ENCODE measurements at regions of chr3 and their contacts with region 1.

Region 1: GRCh38 chr3:47443611-47443995 is 32.1 kb downstream of the SCAP start:
- DNase-seq: peak; percentile 72 to 79
- H3K4me3 ChIP-seq: 0 out of 2 replicates have a peak overlapping the region, but pooled peaks have one; percentile 5
- H3K4me3 Mint-ChIP-seq: peak overlapping the region; percentile 55
- H3K27ac Mint-ChIP-seq: peak overlapping the region; percentile 70
- H3K4me1 ChIP-seq: peaks cover 37% of the 10 kb centered on the region
- H3K4me1 Mint-ChIP-seq: peaks cover 32% of the 10 kb centered on the region
- H3K27me3 ChIP-seq: no peaks in the 10 kb centered on the region; the same call in 1 of the 2 replicates
- H3K27me3 Mint-ChIP-seq: no peaks in the 10 kb centered on the region
- CTCF ChIP-seq: no peak

Region 2: GRCh38 chr3:47394140-47394870 is 49.3 kb before region 1 on chr3:
- CTCF ChIA-PET with region 1: no interaction called
- POLR2A ChIA-PET with region 1: interaction called, 13 read pairs
- intact Hi-C with region 1: no loop called
- DNase-seq: peak; percentile 82 to 87
- H3K4me3 ChIP-seq: peak overlapping the region; percentile 5; the same call in 1 of the 2 replicates
- H3K4me3 Mint-ChIP-seq: peak overlapping the region; percentile 69
- H3K27ac Mint-ChIP-seq: peak overlapping the region; percentile 90
- H3K4me1 ChIP-seq: peaks cover 33% of the 10 kb centered on the region
- H3K4me1 Mint-ChIP-seq: peaks cover 17% of the 10 kb centered on the region
- H3K27me3 ChIP-seq: no peaks in the 10 kb centered on the region
- H3K27me3 Mint-ChIP-seq: no peaks in the 10 kb centered on the region
- CTCF ChIP-seq: peak in 1 of 2 experiments; percentile 42

Region 3: GRCh38 chr3:47455806-47456452 is 12.3 kb after region 1 on chr3:
- CTCF ChIA-PET with region 1: no interaction called
- POLR2A ChIA-PET with region 1: no interaction called
- intact Hi-C with region 1: no loop called
- DNase-seq: no peak
- H3K4me3 ChIP-seq: no peak overlapping the region
- H3K4me3 Mint-ChIP-seq: no peak overlapping the region
- H3K27ac Mint-ChIP-seq: no peak overlapping the region
- H3K4me1 ChIP-seq: peaks cover 5% of the 10 kb centered on the region; the same call in 1 of the 2 replicates
- H3K4me1 Mint-ChIP-seq: no peaks in the 10 kb centered on the region
- H3K27me3 ChIP-seq: no peaks in the 10 kb centered on the region
- H3K27me3 Mint-ChIP-seq: no peaks in the 10 kb centered on the region
- CTCF ChIP-seq: no peak

Region 4: DNA sequence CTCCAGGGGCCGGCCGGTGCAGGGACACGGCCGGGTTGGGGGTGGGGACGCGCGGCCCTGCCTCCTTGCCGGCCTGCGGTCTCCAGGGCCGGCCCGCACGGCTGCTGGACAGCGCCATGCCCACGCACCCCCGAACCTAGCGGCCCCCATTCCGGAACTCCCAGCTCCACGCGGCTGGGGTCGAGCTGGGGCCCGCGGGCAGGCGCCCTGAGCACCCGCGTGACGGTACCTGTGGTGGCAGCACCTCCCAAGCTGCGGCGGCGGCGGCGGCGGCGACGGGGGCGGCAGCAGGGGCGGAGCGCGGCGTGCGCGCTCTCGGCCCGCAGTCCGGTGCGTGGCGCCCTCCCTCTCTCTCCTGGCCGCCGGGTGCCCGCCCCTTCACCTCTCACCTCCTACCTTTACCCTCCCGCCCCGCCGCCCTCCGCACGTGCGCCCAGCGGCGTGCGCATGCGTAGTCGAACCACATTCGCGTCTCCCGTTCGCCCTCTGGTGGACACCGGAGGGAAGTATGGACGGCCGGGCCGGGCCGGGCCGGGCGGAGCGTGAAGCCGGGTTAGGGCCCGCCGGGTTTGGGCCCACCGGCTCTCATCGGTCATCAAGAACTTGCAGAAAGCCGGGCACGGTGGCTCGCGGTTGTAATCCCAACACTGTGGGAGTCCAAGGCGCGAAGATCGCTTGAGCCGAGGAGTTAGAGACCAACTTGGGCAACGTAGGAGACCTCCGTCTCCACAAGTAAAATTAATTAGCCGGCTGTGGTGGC is 32.1 kb after region 1 on chr3 and contains the start of gene SCAP:
- CTCF ChIA-PET with region 1: interaction called, 5 read pairs
- POLR2A ChIA-PET with region 1: no interaction called
- intact Hi-C with region 1: loop called (anchors 1 kb)
- DNase-seq: peak; percentile 94 to 95
- H3K4me3 ChIP-seq: peak within 1 kb of the TSS; percentile 74
- H3K4me3 Mint-ChIP-seq: peak within 1 kb of the TSS; percentile 89
- H3K27ac Mint-ChIP-seq: peak within 1 kb of the TSS; percentile 82
- H3K4me1 ChIP-seq: peaks cover 12% of the 10 kb centered on the region
- H3K4me1 Mint-ChIP-seq: peaks cover 11% of the 10 kb centered on the region
- H3K27me3 ChIP-seq: no peaks in the 10 kb centered on the region
- H3K27me3 Mint-ChIP-seq: no peaks in the 10 kb centered on the region
- CTCF ChIP-seq: peak; percentile 80 to 84
- total RNA-seq, gene SCAP: 104 and 115 TPM in 2 replicates

Region 5: DNA sequence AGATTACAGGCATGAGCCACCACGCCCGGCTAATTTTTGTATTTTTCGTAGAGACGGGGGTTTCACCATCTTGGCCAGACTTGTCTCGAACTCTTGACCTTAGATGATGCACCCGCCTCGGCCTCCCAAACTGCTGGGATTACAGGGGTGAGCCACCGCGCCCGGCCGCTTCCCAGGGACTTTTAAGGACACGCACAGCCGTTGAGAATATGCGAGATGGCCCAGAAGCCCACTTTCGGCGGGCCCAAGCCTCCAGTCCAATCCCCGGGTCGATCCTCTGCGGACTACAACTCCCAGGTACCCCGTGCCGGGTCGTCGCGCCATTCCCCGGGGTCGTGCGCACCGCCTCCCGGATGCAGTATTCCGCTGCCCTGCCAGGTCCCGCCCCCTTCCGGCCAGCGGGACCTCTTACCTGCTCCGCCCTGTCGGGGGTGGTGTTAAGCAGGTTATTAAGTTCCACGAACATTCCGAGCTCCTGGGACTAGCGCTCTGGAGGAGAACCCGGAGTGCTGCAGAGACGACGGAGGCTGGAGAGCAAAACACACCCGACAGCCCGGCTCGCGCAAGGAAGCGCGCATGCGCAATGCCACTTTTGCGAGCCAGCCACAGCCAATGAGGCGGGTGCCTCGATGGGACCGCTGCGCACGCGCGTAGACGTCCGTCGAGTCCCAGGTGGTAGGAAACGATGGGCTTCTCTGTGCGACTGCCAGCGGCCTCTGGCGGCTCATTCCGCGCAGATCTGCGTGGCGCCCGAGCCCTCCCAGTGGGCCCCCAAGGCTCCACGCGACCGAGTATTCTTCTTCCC is 69.7 kb after region 1 on chr3 and contains the start of gene ELP6:
- CTCF ChIA-PET with region 1: no interaction called
- POLR2A ChIA-PET with region 1: no interaction called
- intact Hi-C with region 1: loop called (anchors 2 kb)
- DNase-seq: peak; percentile 97
- H3K4me3 ChIP-seq: peak within 1 kb of the TSS; percentile 49
- H3K4me3 Mint-ChIP-seq: peak within 1 kb of the TSS; percentile 89
- H3K27ac Mint-ChIP-seq: peak within 1 kb of the TSS; percentile 94
- H3K4me1 ChIP-seq: no peaks in the 10 kb centered on the region
- H3K4me1 Mint-ChIP-seq: peaks cover 6% of the 10 kb centered on the region
- H3K27me3 ChIP-seq: no peaks in the 10 kb centered on the region
- H3K27me3 Mint-ChIP-seq: no peaks in the 10 kb centered on the region
- CTCF ChIP-seq: peak; percentile 41 to 74
- total RNA-seq, gene ELP6: 41.0 and 42.0 TPM in 2 replicates